ENCODE measurements at regions of chr19 and their contacts with region 1.

Region 1: GRCh38 chr19:32580901-32581703 is at the start of gene PDCD5:
- DNase-seq: peak; percentile 92 to 94
- ATAC-seq: peak; percentile 93 to 95
- H3K4me3 ChIP-seq: peak within 1 kb of the TSS; percentile 70 to 94 (median 78)
- H3K27ac ChIP-seq: peak within 1 kb of the TSS; percentile 79 to 92 (median 86)
- H3K4me1 ChIP-seq: peaks cover 7 to 11% of the 10 kb centered on the region in 2 donors
- H3K27me3 ChIP-seq: no peaks in the 10 kb centered on the region
- CTCF ChIP-seq: no peak
- POLR2A ChIP-seq: peak; percentile 83 to 84
- total RNA-seq, gene PDCD5: 121 to 201 (median 170) TPM

Region 2: GRCh38 chr19:31349160-31349881 is 1231.8 kb before region 1 on chr19 and contains the start of gene TSHZ3:
- in situ Hi-C with region 1: no loop called
- intact Hi-C with region 1: loop called (anchors 5 kb)
- DNase-seq: peak; percentile 46 to 48
- ATAC-seq: peak; percentile 45
- H3K4me3 ChIP-seq: peak within 1 kb of the TSS; percentile 71 to 85 (median 73)
- H3K27ac ChIP-seq: peak within 1 kb of the TSS; percentile 73 to 83 (median 76)
- H3K4me1 ChIP-seq: peaks cover 4 to 22% of the 10 kb centered on the region in 2 donors
- H3K27me3 ChIP-seq: peaks cover 20 to 41% (median 24%) of the 10 kb centered on the region in 3 donors
- CTCF ChIP-seq: no peak
- POLR2A ChIP-seq: peak; percentile 12 to 23
- total RNA-seq, gene TSHZ3: 1.6 to 2.3 (median 1.9) TPM

Region 3: DNA sequence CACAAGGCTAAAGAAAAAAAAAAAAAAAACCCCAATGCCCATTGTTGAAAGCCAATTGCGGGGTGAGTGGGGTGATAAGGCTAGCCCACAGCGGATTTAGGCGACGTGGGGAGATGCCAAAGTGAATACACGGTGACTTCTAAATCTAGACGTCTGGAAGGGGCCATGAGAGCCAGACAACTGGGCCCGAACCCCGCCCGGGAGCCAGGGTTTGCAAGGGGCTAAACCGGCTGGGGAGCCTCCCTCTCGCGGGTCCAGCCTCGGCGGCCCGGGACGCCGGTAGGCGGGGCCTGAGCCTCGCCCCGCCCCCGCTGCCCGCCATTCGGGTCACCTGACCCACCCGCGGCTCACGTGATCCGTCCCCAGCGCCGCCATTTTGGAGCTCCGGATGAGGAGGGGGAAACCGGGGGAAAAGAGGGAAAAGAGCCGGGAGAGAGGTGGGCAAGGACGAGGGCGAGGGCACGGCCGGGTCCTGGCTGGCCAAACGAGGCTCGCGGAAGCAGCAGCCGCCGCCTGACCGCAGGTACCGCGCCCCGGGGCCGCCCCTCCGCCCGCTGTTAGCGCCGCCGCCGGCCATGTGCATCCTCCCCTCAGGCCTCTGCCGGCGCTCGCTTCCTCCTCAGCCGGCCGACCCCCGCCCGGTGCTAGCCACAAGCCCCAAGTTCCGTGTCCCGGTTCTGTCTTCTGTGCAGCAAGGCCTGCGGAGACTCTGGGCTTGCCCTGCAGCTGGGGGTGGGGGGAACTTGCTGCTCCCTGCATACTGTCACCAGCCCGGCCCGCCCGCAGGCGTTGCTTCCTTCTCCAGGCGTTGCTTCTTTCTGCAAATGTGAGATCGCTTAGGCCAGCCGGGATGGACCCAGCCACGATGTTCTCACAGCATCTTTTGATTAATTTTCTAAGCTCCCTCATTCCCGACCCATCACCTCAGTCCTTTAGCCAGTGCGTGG is 235.6 kb before region 1 on chr19 and contains the start of gene ZNF507:
- in situ Hi-C with region 1: no loop called
- intact Hi-C with region 1: loop called (anchors 5 kb)
- DNase-seq: peak; percentile 60 to 75
- ATAC-seq: peak; percentile 89 to 91
- H3K4me3 ChIP-seq: peak within 1 kb of the TSS; percentile 83 to 97 (median 87)
- H3K27ac ChIP-seq: peak within 1 kb of the TSS; percentile 75 to 86 (median 84)
- H3K4me1 ChIP-seq: peaks cover 28 to 32% of the 10 kb centered on the region in 2 donors
- H3K27me3 ChIP-seq: no peaks in the 10 kb centered on the region
- CTCF ChIP-seq: peak in 1 of 5 experiments; percentile 7
- POLR2A ChIP-seq: no peak
- total RNA-seq, gene ZNF507: 11.9 to 21.8 (median 17.8) TPM

Region 4: DNA sequence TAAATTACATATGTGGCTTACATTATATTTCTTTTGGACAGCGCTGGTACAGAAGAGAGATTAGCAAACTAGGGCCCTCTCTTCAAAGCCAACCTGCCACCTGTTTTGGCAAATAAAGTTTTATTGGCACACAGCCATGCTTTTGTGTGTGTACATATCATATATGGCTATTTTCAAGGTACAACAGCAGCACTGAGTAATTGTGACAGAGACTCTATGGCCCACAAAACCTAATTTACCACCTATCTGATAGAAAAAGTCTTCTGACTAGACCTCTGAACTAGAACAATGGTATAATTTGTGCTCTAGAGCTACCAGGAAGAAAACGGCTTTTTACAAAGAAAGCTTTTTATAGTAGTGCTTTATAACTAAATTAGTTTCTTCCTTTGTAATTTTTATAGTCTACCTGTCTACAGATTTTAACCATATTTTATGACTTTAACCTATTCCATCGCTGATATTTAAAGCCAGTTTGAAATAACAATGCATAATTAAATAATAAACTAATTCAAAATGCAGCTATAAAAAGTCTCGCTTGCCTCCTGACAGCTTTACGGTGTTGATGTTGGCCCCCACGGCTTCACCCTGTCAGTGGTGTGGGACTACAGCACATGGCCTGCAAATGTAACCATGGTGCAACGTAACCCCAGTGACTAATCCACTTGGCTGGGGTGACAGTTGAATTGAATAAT is 193.3 kb before region 1 on chr19:
- in situ Hi-C with region 1: no loop called
- intact Hi-C with region 1: no loop called
- DNase-seq: no peak
- ATAC-seq: no peak
- H3K4me3 ChIP-seq: no peak overlapping the region
- H3K27ac ChIP-seq: no peak overlapping the region
- H3K4me1 ChIP-seq: peaks cover 0 to 8% of the 10 kb centered on the region in 2 donors
- H3K27me3 ChIP-seq: no peaks in the 10 kb centered on the region
- CTCF ChIP-seq: no peak
- POLR2A ChIP-seq: no peak

Region 5: GRCh38 chr19:32674959-32675719 is 94.0 kb after region 1 on chr19 and contains the start of gene ANKRD27:
- in situ Hi-C with region 1: no loop called
- intact Hi-C with region 1: loop called (anchors 2 kb)
- DNase-seq: peak; percentile 97 to 99
- ATAC-seq: peak; percentile 85 to 87
- H3K4me3 ChIP-seq: peak within 1 kb of the TSS; percentile 69 to 95 (median 82)
- H3K27ac ChIP-seq: peak within 1 kb of the TSS; percentile 88 to 97 (median 94)
- H3K4me1 ChIP-seq: peaks cover 31 to 46% of the 10 kb centered on the region in 2 donors
- H3K27me3 ChIP-seq: peaks cover 0 to 2% (median 0%) of the 10 kb centered on the region in 3 donors
- CTCF ChIP-seq: no peak
- POLR2A ChIP-seq: peak; percentile 90 to 95
- total RNA-seq, gene ANKRD27: 36.4 to 78.3 (median 53.5) TPM

Measured in gastrocnemius medialis (tissue), 4 donors.